ENCODE measurements at regions of chr13 and their contacts with region 1.

Region 1: GRCh38 chr13:94620286-94620896 is 18.7 kb downstream of the GPR180 start:
- DNase-seq: no peak
- H3K4me3 ChIP-seq: no peak overlapping the region
- CTCF ChIP-seq: peak; percentile 61

Region 2: DNA sequence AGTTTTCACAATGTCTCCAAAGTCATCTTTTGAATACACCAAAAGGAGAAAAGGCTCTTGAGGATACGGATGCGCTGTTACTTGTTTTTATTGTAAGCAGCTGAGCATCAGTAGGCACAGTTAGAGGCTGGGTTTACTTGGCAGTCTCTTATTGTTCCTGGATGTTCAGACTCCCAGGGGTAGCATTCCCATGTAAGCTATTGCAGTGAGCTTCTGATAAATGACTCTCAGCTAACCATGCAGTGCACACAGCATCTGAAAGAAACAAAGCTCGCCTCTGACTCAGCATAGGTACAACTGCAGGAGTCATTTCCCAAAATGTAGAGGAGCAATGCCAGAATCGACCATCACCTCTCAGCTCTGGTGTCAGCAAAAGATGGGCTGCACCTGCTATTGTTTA is 225.7 kb before region 1 on chr13:
- CTCF ChIA-PET with region 1: no interaction called
- POLR2A ChIA-PET with region 1: no interaction called
- DNase-seq: no peak
- H3K4me3 ChIP-seq: no peak overlapping the region
- CTCF ChIP-seq: no peak

Region 3: DNA sequence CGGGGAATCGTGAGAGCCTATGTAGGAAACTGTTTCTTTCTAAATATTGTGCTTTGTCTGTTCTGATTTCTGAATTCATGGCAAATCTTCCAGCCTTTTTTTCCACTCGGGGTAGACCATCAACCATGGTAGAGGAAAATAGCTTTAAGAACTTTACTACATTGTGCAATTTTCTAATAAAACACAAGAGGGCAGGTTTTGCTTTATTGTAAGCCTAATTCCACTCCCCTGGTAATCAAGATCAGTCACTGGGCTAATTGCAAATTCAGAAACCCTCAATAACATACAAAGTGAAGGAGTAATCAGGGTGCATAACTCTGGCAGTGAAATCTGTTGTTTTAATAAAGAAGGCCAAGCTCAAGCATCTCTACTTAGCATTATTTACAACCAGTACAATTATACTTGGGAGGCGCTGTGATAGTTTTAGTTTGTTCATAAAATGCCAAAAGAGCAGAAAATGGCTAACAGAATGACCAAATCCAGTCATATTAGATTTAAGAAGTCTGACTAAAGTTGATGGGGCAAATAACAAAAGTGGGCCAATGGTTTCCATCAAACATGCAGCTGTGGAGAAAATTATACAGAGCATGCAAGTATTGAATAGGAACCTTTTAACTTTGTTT is 184.7 kb before region 1 on chr13:
- CTCF ChIA-PET with region 1: interaction called, 173 read pairs
- POLR2A ChIA-PET with region 1: no interaction called
- DNase-seq: no peak
- H3K4me3 ChIP-seq: no peak overlapping the region
- CTCF ChIP-seq: peak; percentile 20

Region 4: GRCh38 chr13:94601446-94602431 is 18.7 kb before region 1 on chr13 and contains the start of gene GPR180:
- CTCF ChIA-PET with region 1: interaction called, 35 read pairs
- POLR2A ChIA-PET with region 1: interaction called, 3 read pairs
- DNase-seq: peak; percentile 98
- H3K4me3 ChIP-seq: peak within 1 kb of the TSS; percentile 97
- CTCF ChIP-seq: no peak

Region 5: GRCh38 chr13:94608586-94608985 is 11.8 kb before region 1 on chr13:
- CTCF ChIA-PET with region 1: interaction called, 35 read pairs
- POLR2A ChIA-PET with region 1: no interaction called
- DNase-seq: no peak
- H3K4me3 ChIP-seq: no peak overlapping the region
- CTCF ChIP-seq: no peak

Region 6: GRCh38 chr13:94632227-94632980 is 12.0 kb after region 1 on chr13:
- CTCF ChIA-PET with region 1: interaction called, 25 read pairs
- POLR2A ChIA-PET with region 1: no interaction called
- DNase-seq: no peak
- H3K4me3 ChIP-seq: no peak overlapping the region
- CTCF ChIP-seq: no peak